Panc1 (cell line): ENCODE measurements at regions of chr2 and their contacts with region 1.

Region 1: GRCh38 chr2:235541016-235541415 is 47.2 kb downstream of the AGAP1 start:
- DNase-seq: no peak
- ATAC-seq: no peak
- H3K4me3 ChIP-seq: no peak overlapping the region
- H3K27ac ChIP-seq: no peak overlapping the region
- H3K4me1 ChIP-seq: peaks cover 3% of the 10 kb centered on the region; the same call in 1 of the 2 replicates
- H3K27me3 ChIP-seq: no peaks in the 10 kb centered on the region
- CTCF ChIP-seq: no peak

Region 2: DNA sequence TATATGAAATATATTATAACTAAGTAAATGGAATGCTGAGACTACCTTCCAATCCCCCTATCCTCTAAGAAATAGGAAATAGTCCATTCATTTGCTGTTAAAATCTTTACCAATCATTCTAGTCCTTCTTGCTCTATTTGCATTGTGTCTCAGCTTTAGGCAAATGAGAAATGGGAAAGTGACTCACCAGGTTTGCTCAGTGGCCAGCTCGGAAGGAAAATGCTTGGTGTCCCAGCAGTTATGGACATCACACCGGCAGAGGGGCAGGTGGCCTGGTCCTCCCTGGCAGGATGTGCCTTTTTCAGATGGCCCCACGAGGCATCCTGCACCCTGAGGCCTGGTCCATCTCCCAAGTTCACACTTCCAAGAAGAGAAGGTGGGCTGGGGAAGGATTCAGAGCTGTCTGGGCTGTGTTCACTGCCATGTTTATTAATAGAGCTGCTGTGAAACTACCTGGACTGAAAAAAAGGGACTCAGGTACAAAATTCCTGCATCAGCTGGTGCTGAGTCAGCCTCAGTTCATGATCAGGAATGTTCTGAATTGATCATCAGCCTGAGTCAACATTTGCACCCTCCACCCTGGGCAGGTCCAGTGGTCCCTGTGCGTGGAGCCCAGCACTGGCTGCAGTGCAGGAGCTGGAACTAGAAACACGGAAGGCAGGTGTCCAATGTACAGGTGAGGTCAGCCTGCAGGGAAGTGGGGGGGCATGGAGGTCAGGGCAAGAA is 984.0 kb before region 1 on chr2:
- CTCF ChIA-PET with region 1: no interaction called
- POLR2A ChIA-PET with region 1: interaction called, 11 read pairs
- in situ Hi-C with region 1: no loop called
- intact Hi-C with region 1: no loop called
- DNase-seq: no peak
- ATAC-seq: peak; percentile 76
- H3K4me3 ChIP-seq: no peak overlapping the region
- H3K27ac ChIP-seq: no peak overlapping the region
- H3K4me1 ChIP-seq: no peaks in the 10 kb centered on the region
- H3K27me3 ChIP-seq: no peaks in the 10 kb centered on the region
- CTCF ChIP-seq: no peak